ENCODE measurements at regions of chr12 and their contacts with region 1.

Region 1: DNA sequence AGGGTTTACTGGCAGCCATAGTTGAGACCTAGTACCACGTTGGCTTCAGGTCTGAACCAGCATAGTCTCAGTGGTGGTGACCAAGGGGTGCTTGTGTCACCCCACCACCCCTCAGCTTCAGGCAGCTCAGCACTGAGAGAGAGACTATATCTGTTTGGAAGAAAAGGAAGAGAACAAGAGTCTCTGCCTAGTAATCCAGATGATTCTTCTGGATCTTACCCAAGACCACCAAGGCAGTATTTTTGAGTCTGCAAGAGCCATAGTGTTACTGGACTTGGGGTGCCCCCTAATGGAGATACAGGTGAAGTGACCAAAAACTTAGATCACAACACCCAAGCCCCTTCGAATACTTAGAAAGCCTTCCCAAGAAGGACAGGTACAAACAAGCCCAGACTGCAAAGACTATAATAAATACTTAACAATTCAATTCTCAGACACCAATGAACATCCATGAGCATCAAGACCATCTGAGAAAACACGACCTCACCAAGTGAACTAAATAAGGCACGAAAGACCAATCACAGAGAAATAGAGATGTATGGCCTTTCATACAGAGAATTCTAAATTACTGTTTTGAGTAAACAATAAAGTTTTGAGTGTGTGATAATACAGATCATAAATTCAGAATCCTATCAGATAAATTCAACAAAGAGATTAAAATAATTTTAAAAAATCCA is 107.0 kb downstream of the HELB start:
- H3K4me3 Mint-ChIP-seq: no peak overlapping the region
- H3K27ac Mint-ChIP-seq: peak overlapping the region; percentile 35
- H3K4me1 Mint-ChIP-seq: peaks cover 26% of the 10 kb centered on the region
- H3K27me3 Mint-ChIP-seq: no peaks in the 10 kb centered on the region

Region 2: GRCh38 chr12:66279123-66279712 is 130.1 kb before region 1 on chr12:
- intact Hi-C with region 1: loop called (anchors 2 kb)
- H3K4me3 Mint-ChIP-seq: no peak overlapping the region
- H3K27ac Mint-ChIP-seq: peak overlapping the region; percentile 58
- H3K4me1 Mint-ChIP-seq: peaks cover 32% of the 10 kb centered on the region
- H3K27me3 Mint-ChIP-seq: no peaks in the 10 kb centered on the region

Region 3: GRCh38 chr12:66352197-66352596 is 57.1 kb before region 1 on chr12:
- intact Hi-C with region 1: loop called (anchors 1 kb)
- H3K4me3 Mint-ChIP-seq: no peak overlapping the region
- H3K27ac Mint-ChIP-seq: no peak overlapping the region
- H3K4me1 Mint-ChIP-seq: peaks cover 6% of the 10 kb centered on the region
- H3K27me3 Mint-ChIP-seq: no peaks in the 10 kb centered on the region

Region 4: DNA sequence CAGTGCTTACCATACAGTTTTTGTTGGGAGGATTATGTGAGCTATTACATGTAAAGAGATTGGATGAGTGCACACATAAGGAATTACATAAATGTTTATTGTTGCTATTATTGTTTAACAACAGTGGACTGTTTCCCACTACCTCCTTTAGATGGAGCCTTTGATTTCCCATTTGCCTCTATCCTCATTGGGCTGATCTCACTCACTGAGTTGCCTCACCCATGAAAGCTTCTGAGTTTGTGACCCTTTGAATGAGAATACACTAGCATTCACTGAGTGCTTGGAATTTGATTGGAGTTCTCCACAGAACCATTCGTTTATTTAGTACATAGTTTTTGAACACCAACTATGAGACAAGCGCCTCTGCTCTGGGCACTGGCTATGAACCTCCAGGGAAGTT is 13.9 kb after region 1 on chr12:
- intact Hi-C with region 1: no loop called
- H3K4me3 Mint-ChIP-seq: no peak overlapping the region
- H3K27ac Mint-ChIP-seq: no peak overlapping the region
- H3K4me1 Mint-ChIP-seq: no peaks in the 10 kb centered on the region
- H3K27me3 Mint-ChIP-seq: no peaks in the 10 kb centered on the region

Region 5: GRCh38 chr12:66538970-66539369 is 129.6 kb after region 1 on chr12:
- intact Hi-C with region 1: no loop called
- H3K4me3 Mint-ChIP-seq: no peak overlapping the region
- H3K27ac Mint-ChIP-seq: no peak overlapping the region
- H3K4me1 Mint-ChIP-seq: no peaks in the 10 kb centered on the region
- H3K27me3 Mint-ChIP-seq: no peaks in the 10 kb centered on the region